ENCODE measurements at regions of chr15 and their contacts with region 1.

Region 1: GRCh38 chr15:69755551-69756310 is 303.1 kb downstream of the RPLP1 start:
- DNase-seq: peak; percentile 90
- H3K4me3 Mint-ChIP-seq: peak overlapping the region; percentile 46
- H3K27ac Mint-ChIP-seq: peak overlapping the region; percentile 97
- H3K4me1 Mint-ChIP-seq: peaks cover 94% of the 10 kb centered on the region
- H3K27me3 Mint-ChIP-seq: peaks cover 4% of the 10 kb centered on the region

Region 2: GRCh38 chr15:69253156-69253555 is 502.6 kb before region 1 on chr15:
- CTCF ChIA-PET with region 1: no interaction called
- intact Hi-C with region 1: no loop called
- DNase-seq: no peak
- H3K4me3 Mint-ChIP-seq: no peak overlapping the region
- H3K27ac Mint-ChIP-seq: no peak overlapping the region
- H3K4me1 Mint-ChIP-seq: no peaks in the 10 kb centered on the region
- H3K27me3 Mint-ChIP-seq: no peaks in the 10 kb centered on the region

Region 3: DNA sequence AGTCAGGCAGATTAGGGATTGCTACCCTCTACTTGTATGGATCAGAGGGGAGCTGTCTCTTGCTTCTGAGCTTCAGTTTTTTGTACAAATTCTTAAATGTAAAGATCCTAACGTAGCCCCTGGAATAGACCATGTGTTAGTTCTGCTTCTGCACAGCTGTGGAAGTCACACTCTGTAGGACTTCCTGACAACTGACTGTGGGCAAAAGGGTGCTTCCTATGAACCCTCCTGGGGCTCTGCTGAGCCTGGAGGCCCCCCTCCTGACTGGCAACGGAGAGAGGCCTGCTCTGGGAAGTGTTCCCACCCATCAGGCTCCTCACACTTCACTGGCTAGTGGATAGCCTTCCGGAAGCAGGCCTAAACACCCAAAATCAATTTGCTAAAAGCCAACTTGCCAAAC is 172.1 kb before region 1 on chr15:
- CTCF ChIA-PET with region 1: no interaction called
- intact Hi-C with region 1: no loop called
- DNase-seq: no peak
- H3K4me3 Mint-ChIP-seq: no peak overlapping the region
- H3K27ac Mint-ChIP-seq: no peak overlapping the region
- H3K4me1 Mint-ChIP-seq: peaks cover 5% of the 10 kb centered on the region
- H3K27me3 Mint-ChIP-seq: no peaks in the 10 kb centered on the region

Region 4: DNA sequence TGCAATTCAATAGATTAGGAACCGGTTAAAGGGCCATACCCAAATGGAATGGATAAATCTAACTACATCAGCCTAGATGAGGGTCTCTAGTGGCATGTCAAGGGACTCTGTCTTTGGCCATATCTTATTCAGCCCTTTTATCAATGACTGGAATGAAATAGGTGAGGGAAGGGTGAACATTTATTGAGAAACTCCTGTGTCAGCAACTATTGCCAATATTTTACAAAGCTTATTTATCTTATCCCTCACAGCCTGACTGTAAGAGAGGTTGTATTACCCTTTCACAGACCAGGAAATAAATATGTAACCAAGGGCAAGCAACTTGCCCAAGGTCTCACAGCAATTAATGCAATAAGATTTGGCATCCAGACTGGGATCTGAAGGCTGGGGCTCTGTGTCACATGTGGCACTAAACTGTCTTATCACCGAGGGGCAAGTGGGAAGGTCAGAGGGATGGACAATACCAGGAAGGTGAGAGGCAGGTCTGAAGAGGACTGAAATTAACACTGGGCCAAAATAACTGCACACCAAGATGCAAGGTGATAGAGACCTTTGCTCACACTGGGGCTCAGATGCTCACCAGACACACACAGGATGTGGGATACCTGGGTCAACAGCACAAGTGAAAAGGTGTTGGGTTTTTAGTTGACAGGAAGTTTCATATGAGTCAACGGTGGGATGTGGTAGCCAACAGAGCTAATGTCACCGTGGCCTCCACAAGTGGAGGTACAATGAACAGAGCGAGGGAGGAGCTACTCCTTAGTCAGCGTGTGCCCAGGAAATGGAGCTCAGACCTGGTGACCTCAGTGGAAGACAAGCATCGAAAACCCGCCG is 41.8 kb before region 1 on chr15:
- CTCF ChIA-PET with region 1: no interaction called
- intact Hi-C with region 1: loop called (anchors 1 kb)
- DNase-seq: peak; percentile 90
- H3K4me3 Mint-ChIP-seq: no peak overlapping the region
- H3K27ac Mint-ChIP-seq: peak overlapping the region; percentile 73
- H3K4me1 Mint-ChIP-seq: peaks cover 55% of the 10 kb centered on the region
- H3K27me3 Mint-ChIP-seq: no peaks in the 10 kb centered on the region

Region 5: GRCh38 chr15:69719527-69720240 is 36.0 kb before region 1 on chr15:
- CTCF ChIA-PET with region 1: interaction called, 8 read pairs
- intact Hi-C with region 1: loop called (anchors 1 kb)
- DNase-seq: peak; percentile 78
- H3K4me3 Mint-ChIP-seq: no peak overlapping the region
- H3K27ac Mint-ChIP-seq: peak overlapping the region; percentile 33
- H3K4me1 Mint-ChIP-seq: peaks cover 79% of the 10 kb centered on the region
- H3K27me3 Mint-ChIP-seq: no peaks in the 10 kb centered on the region

Region 6: DNA sequence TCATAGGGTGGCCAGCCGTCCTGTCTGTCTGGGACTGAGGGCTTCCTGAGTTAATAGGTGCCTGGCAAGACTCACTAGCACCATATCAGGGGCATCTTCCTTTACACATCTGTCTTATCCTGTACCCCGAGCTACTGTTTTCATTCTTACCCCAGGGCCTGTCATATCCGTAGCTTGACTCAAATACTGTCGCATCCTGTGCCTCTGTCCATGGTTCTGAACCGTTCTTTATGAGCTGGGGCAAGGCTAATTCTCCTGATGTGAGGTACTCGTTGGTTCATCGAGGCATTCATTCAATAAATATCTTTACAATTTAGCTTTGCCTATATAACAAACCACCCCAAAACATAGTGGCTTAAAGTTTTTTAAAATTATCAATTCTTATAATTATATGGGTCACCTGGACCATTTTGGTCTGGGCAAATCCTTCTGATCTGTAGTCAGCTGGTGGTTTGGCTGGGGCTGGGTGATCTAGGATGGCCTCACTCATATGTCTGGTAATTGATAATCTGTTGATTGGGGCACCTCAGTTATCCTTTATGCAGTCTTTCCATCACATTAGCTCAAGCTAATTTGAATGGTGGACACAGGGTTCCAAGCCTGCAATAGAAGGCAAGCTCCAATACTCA is 220.7 kb after region 1 on chr15:
- CTCF ChIA-PET with region 1: no interaction called
- intact Hi-C with region 1: loop called (anchors 10 kb)
- DNase-seq: peak; percentile 87
- H3K4me3 Mint-ChIP-seq: no peak overlapping the region
- H3K27ac Mint-ChIP-seq: no peak overlapping the region
- H3K4me1 Mint-ChIP-seq: no peaks in the 10 kb centered on the region
- H3K27me3 Mint-ChIP-seq: peaks cover 17% of the 10 kb centered on the region

Region 7: GRCh38 chr15:70545526-70545925 is 789.8 kb after region 1 on chr15:
- CTCF ChIA-PET with region 1: interaction called, 3 read pairs
- intact Hi-C with region 1: loop called (anchors 5 kb)
- DNase-seq: no peak
- H3K4me3 Mint-ChIP-seq: no peak overlapping the region
- H3K27ac Mint-ChIP-seq: peak overlapping the region; percentile 91
- H3K4me1 Mint-ChIP-seq: peaks cover 60% of the 10 kb centered on the region
- H3K27me3 Mint-ChIP-seq: no peaks in the 10 kb centered on the region

Region 8: DNA sequence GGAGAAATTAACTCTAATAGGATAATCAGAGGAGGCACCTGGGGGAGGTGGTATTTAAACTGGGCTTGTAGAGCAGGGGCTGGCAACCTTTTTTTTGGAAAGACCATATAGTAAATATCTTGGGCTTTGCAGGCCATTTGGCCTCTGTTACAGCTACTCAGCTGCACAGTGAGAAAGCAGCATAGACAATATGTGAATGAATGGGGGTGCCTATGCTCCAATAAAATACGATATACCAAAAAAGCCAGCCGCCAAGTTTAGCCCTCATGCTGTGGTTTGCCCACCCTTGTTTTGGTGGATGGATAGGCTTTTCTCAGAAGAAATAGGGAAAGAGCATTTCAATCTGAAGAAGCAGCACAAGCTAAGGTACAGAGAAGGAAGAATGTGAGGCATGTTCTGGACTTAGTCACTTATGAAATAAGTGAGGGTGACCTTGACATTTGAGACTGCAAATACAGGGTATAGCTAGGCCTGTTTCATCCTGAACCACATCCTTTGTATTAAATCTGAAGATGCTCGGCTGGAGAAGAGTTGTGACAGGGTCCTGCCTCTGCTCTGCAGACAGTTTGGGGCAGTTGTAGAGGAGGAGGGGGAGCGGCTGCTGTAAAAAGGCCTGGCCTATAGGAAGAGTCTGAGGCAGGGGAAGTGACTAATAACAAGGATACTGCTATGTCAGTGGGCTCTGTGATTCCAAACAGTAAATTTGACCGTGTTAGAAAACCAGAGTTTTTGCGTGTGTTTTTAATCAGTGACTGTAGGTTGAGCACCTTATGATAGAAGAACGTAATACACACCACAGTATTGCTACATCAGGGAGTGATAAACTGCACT is 1923.7 kb after region 1 on chr15:
- CTCF ChIA-PET with region 1: no interaction called
- intact Hi-C with region 1: loop called (anchors 5 kb)
- DNase-seq: no peak
- H3K4me3 Mint-ChIP-seq: no peak overlapping the region
- H3K27ac Mint-ChIP-seq: no peak overlapping the region
- H3K4me1 Mint-ChIP-seq: peaks cover 15% of the 10 kb centered on the region
- H3K27me3 Mint-ChIP-seq: peaks cover 12% of the 10 kb centered on the region

Measured in activated naive CD4-positive, alpha-beta T cell treated with anti-CD3 and anti-CD28 coated beads for 36 hours (primary cell).